ENCODE measurements at regions of chr4 and their contacts with region 1.

Region 1: DNA sequence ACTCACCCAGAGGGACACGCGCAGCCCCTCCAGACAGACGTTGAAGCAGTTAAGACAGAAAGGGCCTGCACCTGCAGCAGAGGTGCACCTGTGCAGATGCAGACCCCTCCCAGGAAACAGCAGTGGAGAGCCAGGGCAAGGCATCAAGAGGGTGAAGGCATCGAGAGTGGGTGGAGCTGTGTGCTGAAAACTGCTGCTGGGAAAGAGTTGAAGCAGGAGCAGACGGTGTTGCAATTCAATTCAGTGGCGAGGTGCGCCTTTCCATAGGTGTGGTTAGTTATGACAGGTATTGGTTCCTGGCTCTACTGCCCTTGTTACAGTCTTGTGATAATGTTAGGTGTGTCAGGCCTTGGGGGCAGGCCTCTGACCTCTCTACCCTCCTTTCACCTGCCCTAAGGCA is 16.7 kb downstream of the LETM1 start:
- DNase-seq: no peak
- H3K4me3 ChIP-seq: no peak overlapping the region
- H3K27ac ChIP-seq: peak overlapping the region in 3 of 4 donors; percentile 31 to 59 (median 36)
- H3K4me1 ChIP-seq: no peaks in the 10 kb centered on the region
- H3K27me3 ChIP-seq: no peaks in the 10 kb centered on the region
- CTCF ChIP-seq: no peak
- POLR2A ChIP-seq: no peak

Region 2: DNA sequence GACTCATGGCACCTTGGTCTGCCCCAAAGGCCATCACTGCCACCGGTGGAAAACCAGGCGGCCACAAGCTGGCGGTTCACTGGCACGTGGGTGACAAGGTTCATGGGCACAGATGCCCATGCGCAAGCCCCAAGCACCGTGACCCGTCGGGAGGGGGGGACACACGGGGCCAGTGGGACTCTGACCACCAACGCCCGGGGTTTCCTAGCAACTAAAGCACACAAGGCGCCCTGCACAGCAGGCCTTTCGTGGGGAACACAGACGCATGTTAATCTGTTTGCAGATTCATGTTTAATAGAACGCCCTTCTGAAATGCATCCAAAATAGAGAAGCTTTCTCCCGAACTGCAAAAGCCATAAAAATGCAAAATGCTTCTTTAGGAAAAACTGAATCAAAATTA is 199.1 kb before region 1 on chr4:
- intact Hi-C with region 1: no loop called
- DNase-seq: no peak
- H3K4me3 ChIP-seq: no peak overlapping the region
- H3K27ac ChIP-seq: no peak overlapping the region
- H3K4me1 ChIP-seq: peaks cover 0 to 10% (median 7%) of the 10 kb centered on the region in 3 donors
- H3K27me3 ChIP-seq: peaks cover 0 to 7% (median 0%) of the 10 kb centered on the region in 4 donors
- CTCF ChIP-seq: no peak
- POLR2A ChIP-seq: no peak

Region 3: GRCh38 chr4:1825326-1825725 is 14.0 kb before region 1 on chr4:
- intact Hi-C with region 1: loop called (anchors 2 kb)
- DNase-seq: no peak
- H3K4me3 ChIP-seq: no peak overlapping the region
- H3K27ac ChIP-seq: no peak overlapping the region
- H3K4me1 ChIP-seq: no peaks in the 10 kb centered on the region
- H3K27me3 ChIP-seq: no peaks in the 10 kb centered on the region
- CTCF ChIP-seq: no peak
- POLR2A ChIP-seq: no peak

Measured in esophagus squamous epithelium (tissue), 5 donors.